ENCODE measurements at regions of chr21 and their contacts with region 1.

Region 1: GRCh38 chr21:37372127-37372731 is 5.7 kb downstream of the DYRK1A start:
- DNase-seq: no peak
- H3K4me3 Mint-ChIP-seq: no peak overlapping the region
- H3K27ac Mint-ChIP-seq: no peak overlapping the region
- H3K4me1 Mint-ChIP-seq: peaks cover 74% of the 10 kb centered on the region
- H3K27me3 Mint-ChIP-seq: no peaks in the 10 kb centered on the region

Region 2: GRCh38 chr21:37155186-37155585 is 217.0 kb before region 1 on chr21:
- CTCF ChIA-PET with region 1: no interaction called
- POLR2A ChIA-PET with region 1: interaction called, 10 read pairs
- DNase-seq: no peak
- H3K4me3 Mint-ChIP-seq: no peak overlapping the region
- H3K27ac Mint-ChIP-seq: no peak overlapping the region
- H3K4me1 Mint-ChIP-seq: peaks cover 11% of the 10 kb centered on the region
- H3K27me3 Mint-ChIP-seq: no peaks in the 10 kb centered on the region